ENCODE measurements at regions of chr1 and their contacts with region 1.

Region 1: DNA sequence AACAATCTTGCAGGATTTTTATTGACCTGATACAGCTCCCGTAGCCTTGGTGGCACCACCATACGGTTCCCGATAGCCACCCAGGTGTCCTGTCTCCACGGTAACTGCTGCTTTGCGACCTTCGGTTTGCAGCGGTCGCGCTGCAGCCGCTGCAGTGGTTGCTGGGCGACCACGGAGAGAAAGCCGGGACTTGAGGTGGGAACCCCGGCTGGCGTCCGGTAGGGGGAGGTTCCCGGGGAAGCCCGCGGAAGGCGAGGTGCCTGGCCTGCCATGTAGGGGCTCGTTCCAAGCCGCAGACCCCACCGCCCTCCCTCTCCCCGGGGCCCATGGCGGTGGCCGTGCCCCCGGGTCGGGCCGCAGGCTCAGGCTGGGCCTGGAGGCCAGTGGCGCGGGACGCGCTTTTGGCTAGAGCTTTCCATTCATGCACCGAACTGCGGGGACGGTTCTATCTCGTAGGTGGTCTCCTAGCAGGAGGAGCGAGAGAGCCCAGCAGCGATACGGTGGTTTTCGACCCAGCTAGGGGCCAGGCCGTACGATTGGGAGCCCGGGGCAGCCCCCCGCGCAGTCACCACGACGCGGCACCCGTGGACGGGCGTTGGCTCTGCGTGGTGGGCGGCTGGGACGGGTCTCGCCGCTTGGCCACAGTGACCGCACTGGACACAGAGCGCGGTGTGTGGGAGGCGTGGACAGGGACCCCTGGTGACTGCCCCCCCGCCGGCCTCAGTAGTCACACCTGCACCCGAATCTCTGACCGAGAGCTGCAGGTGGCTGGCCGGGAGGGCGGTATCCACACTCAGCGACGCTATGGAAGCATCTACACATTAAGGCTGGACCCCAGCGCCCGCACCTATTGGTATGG is at the start of gene KLHDC9:
- DNase-seq: peak; percentile 96
- ATAC-seq: peak; percentile 83
- H3K4me3 ChIP-seq: peak within 1 kb of the TSS; percentile 74
- H3K27ac ChIP-seq: peak within 1 kb of the TSS; percentile 15
- H3K4me1 ChIP-seq: peaks cover 24% of the 10 kb centered on the region
- H3K27me3 ChIP-seq: no peaks in the 10 kb centered on the region
- CTCF ChIP-seq: no peak
- total RNA-seq, gene KLHDC9: 3.2 and 3.3 TPM in 2 replicates

Region 2: GRCh38 chr1:160830321-160831153 is 267.9 kb before region 1 on chr1:
- CTCF ChIA-PET with region 1: no interaction called
- POLR2A ChIA-PET with region 1: no interaction called
- intact Hi-C with region 1: loop called (anchors 2 kb)
- DNase-seq: peak; percentile 93
- ATAC-seq: peak; percentile 60
- H3K4me3 ChIP-seq: no peak overlapping the region
- H3K27ac ChIP-seq: no peak overlapping the region
- H3K4me1 ChIP-seq: peaks cover 43% of the 10 kb centered on the region
- H3K27me3 ChIP-seq: no peaks in the 10 kb centered on the region
- CTCF ChIP-seq: peak; percentile 98

Region 3: GRCh38 chr1:161045750-161046571 is 52.5 kb before region 1 on chr1 and contains the start of gene USF1:
- CTCF ChIA-PET with region 1: no interaction called
- POLR2A ChIA-PET with region 1: interaction called, 5 read pairs
- intact Hi-C with region 1: loop called (anchors 1 kb)
- DNase-seq: peak; percentile 98
- ATAC-seq: peak; percentile 82
- H3K4me3 ChIP-seq: peak within 1 kb of the TSS; percentile 80
- H3K27ac ChIP-seq: peak within 1 kb of the TSS; percentile 82
- H3K4me1 ChIP-seq: peaks cover 13% of the 10 kb centered on the region
- H3K27me3 ChIP-seq: no peaks in the 10 kb centered on the region
- CTCF ChIP-seq: no peak
- total RNA-seq, gene USF1: 111 and 113 TPM in 2 replicates

Region 4: DNA sequence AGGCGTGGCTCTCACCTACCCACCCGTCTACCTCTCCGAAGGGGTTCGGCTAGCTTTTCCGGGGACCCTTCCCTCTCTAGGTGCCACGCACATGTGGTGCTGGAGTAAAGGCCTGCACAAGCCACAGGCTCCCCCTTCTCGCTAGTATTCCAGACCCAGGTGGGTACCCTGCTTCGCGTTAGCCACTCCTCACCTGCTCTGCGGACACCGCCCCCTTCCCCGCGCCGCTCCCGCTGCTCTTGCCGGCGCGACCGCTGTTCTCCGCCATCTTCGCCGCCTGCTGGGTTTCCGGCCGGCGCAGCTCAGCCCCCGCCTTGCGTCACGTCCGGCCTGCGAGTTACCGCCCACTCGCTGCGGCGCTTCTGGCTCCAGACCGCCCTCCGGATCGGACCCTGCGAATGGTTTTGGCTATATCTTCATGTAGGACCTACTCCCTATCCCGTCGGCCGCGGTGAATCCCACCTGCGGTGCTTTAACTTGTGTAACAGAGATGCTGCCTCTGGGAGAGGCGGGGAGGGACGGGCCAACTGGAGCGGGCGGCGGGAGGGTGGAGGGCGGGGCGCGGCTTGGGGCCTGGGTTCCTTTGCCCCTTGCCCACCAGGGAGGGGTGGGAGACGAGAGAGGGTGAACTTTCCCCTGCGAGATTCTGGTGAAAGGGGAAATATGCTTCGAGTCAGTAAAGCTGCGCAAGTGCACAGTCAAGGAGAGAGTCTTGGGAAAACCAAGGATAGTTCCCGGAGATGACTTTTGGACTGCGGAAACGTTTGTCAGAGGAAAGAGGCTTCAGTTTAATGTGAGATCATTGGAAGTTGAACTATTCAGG is 19.5 kb after region 1 on chr1 and contains the starts of genes NIT1 and PFDN2:
- CTCF ChIA-PET with region 1: no interaction called
- POLR2A ChIA-PET with region 1: no interaction called
- intact Hi-C with region 1: loop called (anchors 1 kb)
- DNase-seq: peak; percentile 90
- ATAC-seq: peak; percentile 71
- H3K4me3 ChIP-seq: peak within 1 kb of the TSS; percentile 85
- H3K27ac ChIP-seq: peak within 1 kb of the TSS; percentile 77
- H3K4me1 ChIP-seq: peaks cover 54% of the 10 kb centered on the region
- H3K27me3 ChIP-seq: no peaks in the 10 kb centered on the region
- CTCF ChIP-seq: no peak
- total RNA-seq, gene NIT1: 18.1 and 27.0 TPM in 2 replicates
- total RNA-seq, gene PFDN2: 174 and 197 TPM in 2 replicates

Region 5: DNA sequence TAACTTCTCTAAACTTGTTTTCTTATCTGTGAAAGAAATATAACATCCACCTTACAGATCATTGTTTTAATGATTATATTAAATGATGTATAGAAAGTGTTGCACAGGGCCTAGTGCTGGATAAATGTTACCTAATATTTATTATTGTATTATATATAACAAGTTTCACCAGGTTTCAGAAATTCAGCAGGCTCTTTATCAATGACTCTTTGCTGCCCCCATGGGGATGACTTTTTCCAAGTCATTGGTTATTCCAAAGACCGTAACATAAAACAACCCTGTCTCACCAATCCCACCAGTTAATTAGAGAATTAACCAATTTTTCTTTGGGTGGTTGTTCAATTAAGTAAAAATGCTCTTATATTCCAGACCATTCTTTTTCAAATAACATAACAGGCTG is 41.3 kb after region 1 on chr1:
- CTCF ChIA-PET with region 1: no interaction called
- POLR2A ChIA-PET with region 1: no interaction called
- intact Hi-C with region 1: loop called (anchors 1 kb)
- DNase-seq: peak; percentile 77
- ATAC-seq: peak; percentile 78
- H3K4me3 ChIP-seq: no peak overlapping the region
- H3K27ac ChIP-seq: no peak overlapping the region
- H3K4me1 ChIP-seq: no peaks in the 10 kb centered on the region
- H3K27me3 ChIP-seq: no peaks in the 10 kb centered on the region
- CTCF ChIP-seq: peak; percentile 74

Region 6: DNA sequence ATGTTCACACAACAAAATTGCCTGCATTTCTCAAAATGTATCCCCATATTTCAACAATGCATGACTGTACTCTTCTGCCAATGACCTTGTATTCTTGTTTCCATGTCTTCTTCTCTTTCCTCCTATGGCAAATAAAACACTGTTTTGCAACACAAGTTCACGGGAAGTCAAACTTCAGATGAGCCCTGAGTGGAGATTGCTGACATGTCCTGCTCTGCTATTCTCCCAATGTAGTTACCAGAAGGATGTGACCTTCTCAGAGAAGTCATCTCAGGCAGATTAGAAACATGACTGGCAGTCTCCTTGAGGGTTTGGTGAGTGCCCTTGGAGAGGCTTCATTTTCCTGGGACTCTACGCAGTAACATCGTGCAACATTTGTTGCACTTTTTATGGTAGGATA is 580.1 kb after region 1 on chr1:
- CTCF ChIA-PET with region 1: no interaction called
- POLR2A ChIA-PET with region 1: no interaction called
- intact Hi-C with region 1: no loop called
- DNase-seq: no peak
- ATAC-seq: no peak
- H3K4me3 ChIP-seq: no peak overlapping the region
- H3K27ac ChIP-seq: no peak overlapping the region
- H3K4me1 ChIP-seq: no peaks in the 10 kb centered on the region
- H3K27me3 ChIP-seq: no peaks in the 10 kb centered on the region
- CTCF ChIP-seq: no peak

Measured in PC-3 (cell line).